ENCODE measurements at regions of chr2 and their contacts with region 1.

Region 1: GRCh38 chr2:8544786-8545694 is 136.8 kb upstream of the ID2 start:
- DNase-seq: peak; percentile 58
- ATAC-seq: peak; percentile 66
- H3K4me3 Mint-ChIP-seq: peak overlapping the region; percentile 38
- H3K27ac Mint-ChIP-seq: peak overlapping the region; percentile 90
- H3K4me1 Mint-ChIP-seq: peaks cover 52% of the 10 kb centered on the region
- H3K27me3 Mint-ChIP-seq: peaks cover 32% of the 10 kb centered on the region
- CTCF ChIP-seq: no peak

Region 2: GRCh38 chr2:8441986-8442385 is 103.1 kb before region 1 on chr2:
- CTCF ChIA-PET with region 1: no interaction called
- POLR2A ChIA-PET with region 1: no interaction called
- intact Hi-C with region 1: loop called (anchors 10 kb)
- DNase-seq: no peak
- ATAC-seq: no peak
- H3K4me3 Mint-ChIP-seq: no peak overlapping the region
- H3K27ac Mint-ChIP-seq: no peak overlapping the region
- H3K4me1 Mint-ChIP-seq: peaks cover 25% of the 10 kb centered on the region
- H3K27me3 Mint-ChIP-seq: peaks cover 45% of the 10 kb centered on the region
- CTCF ChIP-seq: no peak

Region 3: GRCh38 chr2:8488001-8488738 is 56.9 kb before region 1 on chr2:
- CTCF ChIA-PET with region 1: no interaction called
- POLR2A ChIA-PET with region 1: interaction called, 5 read pairs
- intact Hi-C with region 1: loop called (anchors 1 kb)
- DNase-seq: peak; percentile 34
- ATAC-seq: peak; percentile 92
- H3K4me3 Mint-ChIP-seq: peak overlapping the region; percentile 73
- H3K27ac Mint-ChIP-seq: peak overlapping the region; percentile 57
- H3K4me1 Mint-ChIP-seq: peaks cover 29% of the 10 kb centered on the region
- H3K27me3 Mint-ChIP-seq: peaks cover 81% of the 10 kb centered on the region
- CTCF ChIP-seq: no peak

Region 4: GRCh38 chr2:8525582-8526402 is 19.2 kb before region 1 on chr2:
- CTCF ChIA-PET with region 1: interaction called, 4 read pairs
- POLR2A ChIA-PET with region 1: interaction called, 7 read pairs
- intact Hi-C with region 1: loop called (anchors 1 kb)
- DNase-seq: no peak
- ATAC-seq: peak; percentile 46
- H3K4me3 Mint-ChIP-seq: peak overlapping the region; percentile 54
- H3K27ac Mint-ChIP-seq: peak overlapping the region; percentile 36
- H3K4me1 Mint-ChIP-seq: peaks cover 43% of the 10 kb centered on the region
- H3K27me3 Mint-ChIP-seq: peaks cover 30% of the 10 kb centered on the region
- CTCF ChIP-seq: no peak

Region 5: GRCh38 chr2:8563814-8564474 is 18.9 kb after region 1 on chr2:
- CTCF ChIA-PET with region 1: no interaction called
- POLR2A ChIA-PET with region 1: no interaction called
- intact Hi-C with region 1: no loop called
- DNase-seq: no peak
- ATAC-seq: no peak
- H3K4me3 Mint-ChIP-seq: no peak overlapping the region
- H3K27ac Mint-ChIP-seq: no peak overlapping the region
- H3K4me1 Mint-ChIP-seq: no peaks in the 10 kb centered on the region
- H3K27me3 Mint-ChIP-seq: peaks cover 20% of the 10 kb centered on the region
- CTCF ChIP-seq: no peak

Region 6: DNA sequence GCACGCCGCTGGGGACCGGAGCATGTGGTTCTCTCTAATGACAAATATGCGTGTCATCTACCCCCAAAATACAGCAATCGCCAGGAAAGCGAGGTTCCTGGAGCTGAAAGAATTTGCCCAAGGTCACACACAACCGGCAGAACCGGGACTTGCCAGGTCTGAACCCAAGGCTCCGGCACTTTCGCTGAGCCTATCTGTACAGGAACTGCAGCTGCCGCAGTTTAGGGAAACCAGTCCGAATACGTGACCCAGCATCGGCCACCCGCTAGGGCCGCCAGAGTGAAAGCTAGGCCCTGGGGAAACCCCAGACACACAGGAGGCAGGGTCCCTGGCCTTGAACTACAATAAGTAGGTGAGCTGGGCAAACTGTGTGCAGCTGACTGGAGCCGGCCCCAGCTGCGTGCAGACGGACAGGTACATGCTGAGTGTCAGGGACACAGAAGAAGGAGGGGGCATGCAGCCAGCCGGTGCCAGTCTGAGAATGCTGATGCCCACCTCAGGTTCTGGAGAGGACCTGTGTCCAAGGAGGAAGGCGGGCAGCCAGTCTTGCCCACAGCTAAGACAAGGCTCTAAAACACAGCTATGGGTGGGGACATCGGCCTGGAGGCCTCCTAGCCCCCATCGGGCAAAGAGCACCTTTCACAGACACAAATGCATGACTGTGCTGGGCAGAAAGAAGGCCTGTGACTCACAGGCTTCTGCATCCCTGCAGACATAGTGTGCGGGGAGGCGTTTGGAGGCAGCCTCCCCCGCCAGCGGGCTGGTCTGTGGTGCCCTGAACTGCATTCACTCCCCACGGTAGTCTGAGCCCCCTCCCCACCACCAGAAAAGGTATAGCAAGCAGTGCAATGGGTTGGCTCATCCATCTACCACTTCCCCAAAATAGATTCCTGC is 29.4 kb after region 1 on chr2:
- CTCF ChIA-PET with region 1: no interaction called
- POLR2A ChIA-PET with region 1: interaction called, 11 read pairs
- intact Hi-C with region 1: loop called (anchors 1 kb)
- DNase-seq: no peak
- ATAC-seq: peak; percentile 21
- H3K4me3 Mint-ChIP-seq: peak overlapping the region; percentile 63
- H3K27ac Mint-ChIP-seq: peak overlapping the region; percentile 24
- H3K4me1 Mint-ChIP-seq: peaks cover 67% of the 10 kb centered on the region
- H3K27me3 Mint-ChIP-seq: peaks cover 50% of the 10 kb centered on the region
- CTCF ChIP-seq: no peak